CD4-positive, alpha-beta memory T cell (primary cell): ENCODE measurements at regions of chr5 and their contacts with region 1.

Region 1: DNA sequence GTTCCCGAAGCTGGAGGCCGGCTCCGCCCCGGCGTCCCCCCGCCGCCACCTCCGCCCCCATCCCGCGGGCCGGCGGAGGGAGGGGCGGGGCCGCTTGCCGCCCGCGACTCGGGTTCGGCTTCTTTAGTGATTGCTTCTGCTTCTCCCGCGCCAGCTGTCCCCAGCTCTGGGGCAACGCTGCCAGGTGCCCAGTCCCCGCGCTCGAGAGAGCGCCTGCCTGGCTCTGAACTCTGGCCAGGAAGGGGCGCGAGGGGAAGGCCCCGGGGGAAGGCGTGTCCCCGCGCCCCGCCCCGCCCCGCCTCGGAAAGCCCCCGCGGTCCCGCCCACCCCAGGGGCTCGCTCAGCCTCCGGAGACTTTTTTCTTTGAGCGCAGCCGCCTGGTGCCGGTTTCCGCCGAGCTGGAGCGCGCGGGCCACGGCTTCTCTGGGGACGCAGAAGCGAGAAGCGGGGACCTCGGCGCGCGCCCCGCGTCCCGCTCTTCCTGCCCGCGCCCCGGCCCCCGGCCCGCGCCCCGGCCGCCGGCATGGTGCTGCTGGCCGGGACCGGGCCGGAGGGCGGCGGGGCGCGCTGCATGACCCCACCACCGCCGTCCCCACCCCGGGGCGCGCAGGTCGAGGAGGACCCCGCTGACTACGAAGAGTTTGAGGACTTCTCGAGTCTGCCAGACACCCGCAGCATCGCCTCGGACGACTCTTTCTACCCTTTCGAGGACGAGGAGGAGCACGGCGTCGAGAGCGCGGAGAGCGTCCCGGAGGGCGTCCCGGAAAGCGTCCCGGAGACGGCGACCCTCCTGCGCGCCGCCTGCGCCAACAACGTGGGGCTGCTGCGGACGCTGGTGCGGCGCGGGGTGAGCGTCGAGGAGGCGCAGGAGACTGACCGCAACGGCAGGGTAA is at the start of gene ANKRD33B:
- DNase-seq: peak; percentile 74 to 80 (median 77)
- H3K4me3 ChIP-seq: peak within 1 kb of the TSS; percentile 29 to 60
- H3K4me3 Mint-ChIP-seq: peak within 1 kb of the TSS; percentile 84 to 93 (median 88)
- H3K27ac ChIP-seq: peak within 1 kb of the TSS; percentile 74
- H3K27ac Mint-ChIP-seq: peak within 1 kb of the TSS in 5 of 7 donors; percentile 57 to 87 (median 73)
- H3K4me1 ChIP-seq: peaks cover 22% of the 10 kb centered on the region
- H3K4me1 Mint-ChIP-seq: peaks cover 8 to 28% (median 20%) of the 10 kb centered on the region in 4 donors
- H3K27me3 ChIP-seq: no peaks in the 10 kb centered on the region
- H3K27me3 Mint-ChIP-seq: no peaks in the 10 kb centered on the region
- total RNA-seq, gene ANKRD33B: 2.0 to 2.3 TPM

Region 2: GRCh38 chr5:10249948-10250803 is 314.0 kb before region 1 on chr5 and contains the start of gene CCT5:
- CTCF ChIA-PET with region 1: no interaction called
- POLR2A ChIA-PET with region 1: no interaction called
- intact Hi-C with region 1: loop called (anchors 1 kb)
- DNase-seq: peak; percentile 94 to 96 (median 95)
- H3K4me3 ChIP-seq: peak within 1 kb of the TSS; percentile 81 to 99
- H3K4me3 Mint-ChIP-seq: peak within 1 kb of the TSS; percentile 90 to 99 (median 95)
- H3K27ac ChIP-seq: peak within 1 kb of the TSS; percentile 91
- H3K27ac Mint-ChIP-seq: peak within 1 kb of the TSS; percentile 98 to 100 (median 99)
- H3K4me1 ChIP-seq: peaks cover 43% of the 10 kb centered on the region
- H3K4me1 Mint-ChIP-seq: peaks cover 24 to 64% (median 43%) of the 10 kb centered on the region in 4 donors
- H3K27me3 ChIP-seq: no peaks in the 10 kb centered on the region
- H3K27me3 Mint-ChIP-seq: peaks cover 0 to 5% of the 10 kb centered on the region in 2 donors
- total RNA-seq, gene CCT5: 92.7 to 93.3 TPM

Region 3: GRCh38 chr5:10353241-10354047 is 210.7 kb before region 1 on chr5 and contains the start of gene MARCHF6:
- CTCF ChIA-PET with region 1: no interaction called
- POLR2A ChIA-PET with region 1: no interaction called
- intact Hi-C with region 1: loop called (anchors 2 kb)
- DNase-seq: peak; percentile 94 to 97 (median 94)
- H3K4me3 ChIP-seq: peak within 1 kb of the TSS; percentile 85
- H3K4me3 Mint-ChIP-seq: peak within 1 kb of the TSS; percentile 93 to 100 (median 99)
- H3K27ac ChIP-seq: peak within 1 kb of the TSS; percentile 83
- H3K27ac Mint-ChIP-seq: peak within 1 kb of the TSS; percentile 95 to 100 (median 99)
- H3K4me1 ChIP-seq: peaks cover 49% of the 10 kb centered on the region
- H3K4me1 Mint-ChIP-seq: peaks cover 27 to 54% (median 35%) of the 10 kb centered on the region in 4 donors
- H3K27me3 ChIP-seq: no peaks in the 10 kb centered on the region
- H3K27me3 Mint-ChIP-seq: no peaks in the 10 kb centered on the region
- total RNA-seq, gene MARCHF6: 195 to 203 TPM

Region 4: DNA sequence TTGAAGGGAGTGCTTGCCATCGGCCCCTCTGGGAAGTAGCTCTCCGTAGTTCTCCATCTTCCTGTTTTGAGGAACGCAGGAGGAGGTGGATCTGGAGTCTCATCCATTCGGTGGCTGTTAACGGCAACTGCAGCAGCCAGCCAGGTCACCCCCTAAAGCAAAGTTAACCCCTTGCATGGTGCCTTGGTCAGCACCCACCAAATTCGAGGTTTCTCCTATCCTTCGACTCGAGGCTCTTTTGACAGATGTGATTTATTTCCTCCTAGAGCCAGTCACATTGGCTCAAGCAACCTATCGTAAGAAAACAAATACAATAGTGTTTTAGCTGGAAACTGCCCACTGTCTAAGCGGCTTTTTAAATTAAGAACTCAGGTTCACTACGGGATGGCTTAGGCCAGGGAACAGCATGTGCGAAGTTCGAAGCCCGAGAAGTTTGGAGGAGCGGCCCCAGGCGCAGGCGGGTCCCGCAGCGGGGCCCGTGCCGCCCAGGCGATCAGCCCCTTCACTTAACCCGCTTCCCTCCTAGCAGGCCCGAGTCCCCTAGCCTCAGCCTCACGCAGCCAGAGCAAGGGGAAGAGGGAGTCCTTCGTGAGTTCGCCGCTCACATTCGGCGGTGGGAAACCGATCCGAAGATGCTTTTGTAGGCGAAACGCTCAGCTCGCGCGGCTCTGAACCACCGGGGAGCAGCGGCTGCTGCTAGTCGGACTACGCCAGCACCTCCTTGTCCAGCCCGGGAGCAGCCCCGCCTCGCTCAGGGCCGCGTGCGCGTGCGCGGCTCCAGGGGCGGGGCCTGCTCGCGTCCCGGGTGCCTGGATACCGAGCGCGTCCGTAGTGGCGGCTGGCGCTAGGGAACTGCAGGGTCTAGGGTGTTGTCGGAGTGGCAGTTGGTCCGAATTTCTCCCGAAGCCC is 122.9 kb before region 1 on chr5 and contains the start of gene ROPN1L:
- CTCF ChIA-PET with region 1: no interaction called
- POLR2A ChIA-PET with region 1: interaction called, 3 read pairs
- intact Hi-C with region 1: loop called (anchors 2 kb)
- DNase-seq: peak; percentile 75 to 83 (median 78)
- H3K4me3 ChIP-seq: peak within 1 kb of the TSS; percentile 71 to 89
- H3K4me3 Mint-ChIP-seq: peak within 1 kb of the TSS; percentile 86 to 90 (median 86)
- H3K27ac ChIP-seq: peak within 1 kb of the TSS; percentile 53
- H3K27ac Mint-ChIP-seq: peak within 1 kb of the TSS; percentile 22 to 85 (median 70)
- H3K4me1 ChIP-seq: peaks cover 45% of the 10 kb centered on the region
- H3K4me1 Mint-ChIP-seq: peaks cover 37 to 51% (median 38%) of the 10 kb centered on the region in 4 donors
- H3K27me3 ChIP-seq: no peaks in the 10 kb centered on the region
- H3K27me3 Mint-ChIP-seq: no peaks in the 10 kb centered on the region
- total RNA-seq, gene ROPN1L: 0.42 to 0.47 TPM

Region 5: GRCh38 chr5:10601246-10602030 is 37.2 kb after region 1 on chr5:
- CTCF ChIA-PET with region 1: no interaction called
- POLR2A ChIA-PET with region 1: no interaction called
- intact Hi-C with region 1: no loop called
- DNase-seq: no peak
- H3K4me3 ChIP-seq: no peak overlapping the region
- H3K4me3 Mint-ChIP-seq: peak overlapping the region in 7 of 8 donors; percentile 18 to 84 (median 68)
- H3K27ac ChIP-seq: no peak overlapping the region
- H3K27ac Mint-ChIP-seq: peak overlapping the region in 1 of 7 donors; percentile 84
- H3K4me1 ChIP-seq: peaks cover 14% of the 10 kb centered on the region
- H3K4me1 Mint-ChIP-seq: peaks cover 8 to 20% (median 13%) of the 10 kb centered on the region in 4 donors
- H3K27me3 ChIP-seq: no peaks in the 10 kb centered on the region
- H3K27me3 Mint-ChIP-seq: peaks cover 0 to 5% of the 10 kb centered on the region in 2 donors

Region 6: DNA sequence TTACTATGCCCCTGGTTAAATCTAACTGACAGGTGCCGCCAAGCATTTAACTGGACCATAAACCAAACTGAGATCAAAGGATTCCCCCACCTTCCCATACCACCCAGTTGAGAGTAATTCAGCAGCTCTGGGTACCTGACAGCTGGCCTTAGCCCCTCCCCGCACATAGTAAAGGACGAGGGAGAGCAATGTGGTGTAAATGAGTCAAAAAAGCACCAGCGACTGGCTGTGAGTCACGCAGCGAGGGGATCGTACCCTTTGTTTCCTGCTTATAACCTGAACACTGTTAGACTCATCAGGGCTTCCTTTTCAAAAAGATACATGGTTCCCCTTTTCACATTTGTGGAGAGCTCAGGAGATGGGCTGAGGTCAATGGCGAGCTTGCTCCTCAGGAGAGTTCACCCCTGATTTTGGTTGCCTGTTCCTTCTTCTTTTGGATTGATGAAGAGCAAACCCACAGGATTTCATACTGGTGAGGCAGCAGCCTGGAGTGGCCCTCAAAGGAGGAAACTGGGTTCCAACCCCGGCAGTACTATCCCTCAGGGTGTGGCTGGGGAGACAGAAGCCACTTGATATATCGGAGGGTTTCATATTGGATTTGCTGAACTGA is 71.2 kb after region 1 on chr5:
- CTCF ChIA-PET with region 1: no interaction called
- POLR2A ChIA-PET with region 1: no interaction called
- intact Hi-C with region 1: loop called (anchors 2 kb)
- DNase-seq: peak in 4 of 5 donors; percentile 15 to 79 (median 22)
- H3K4me3 ChIP-seq: no peak overlapping the region
- H3K4me3 Mint-ChIP-seq: peak overlapping the region in 7 of 8 donors; percentile 19 to 88 (median 71)
- H3K27ac ChIP-seq: peak overlapping the region; percentile 24
- H3K27ac Mint-ChIP-seq: peak overlapping the region in 6 of 7 donors; percentile 76 to 93 (median 90)
- H3K4me1 ChIP-seq: peaks cover 42% of the 10 kb centered on the region
- H3K4me1 Mint-ChIP-seq: peaks cover 22 to 73% (median 42%) of the 10 kb centered on the region in 4 donors
- H3K27me3 ChIP-seq: no peaks in the 10 kb centered on the region
- H3K27me3 Mint-ChIP-seq: peaks cover 0 to 4% of the 10 kb centered on the region in 2 donors